Cardiac septum (tissue), 1 donor: ENCODE measurements at regions of chr7 and their contacts with region 1.

Region 1: DNA sequence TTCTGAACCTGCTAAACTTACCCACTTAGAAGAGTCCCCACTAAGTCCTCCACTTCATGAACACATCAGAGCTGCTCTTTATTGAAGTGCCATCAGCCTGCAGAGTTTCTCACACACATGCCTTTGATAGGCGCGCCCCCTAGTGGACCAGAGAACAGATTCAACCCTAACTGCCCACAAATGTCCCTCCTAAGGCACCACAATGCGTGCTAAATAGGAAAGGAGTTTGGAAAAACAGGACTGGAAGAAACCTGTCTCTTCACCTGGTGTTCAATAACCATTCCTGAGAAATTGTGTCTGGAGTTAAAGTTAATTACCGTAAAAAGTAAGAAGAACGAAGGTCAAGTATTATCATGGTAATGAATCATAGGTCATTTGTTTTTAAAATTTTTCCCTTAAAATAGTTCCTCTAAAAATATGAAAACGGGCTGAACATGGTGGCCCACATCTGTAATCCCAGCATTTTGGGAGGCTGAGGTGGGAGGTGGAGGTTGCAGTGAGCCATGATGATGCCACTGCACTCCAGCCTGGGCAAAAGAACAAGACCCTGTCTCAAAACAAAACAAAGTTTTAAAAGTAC is 249.7 kb downstream of the ELMO1 start:
- DNase-seq: peak; percentile 87

Region 2: GRCh38 chr7:36487756-36488336 is 711.1 kb before region 1 on chr7:
- intact Hi-C with region 1: loop called (anchors 2 kb)
- DNase-seq: no peak

Region 3: GRCh38 chr7:37031571-37032257 is 167.3 kb before region 1 on chr7:
- intact Hi-C with region 1: loop called (anchors 5 kb)
- DNase-seq: peak; percentile 84